A673 (cell line): ENCODE measurements at regions of chr12 and their contacts with region 1.

Region 1: GRCh38 chr12:6285063-6285477 is 25.4 kb upstream of the PLEKHG6 start:
- DNase-seq: peak; percentile 82
- H3K4me3 ChIP-seq: no peak overlapping the region
- H3K27ac ChIP-seq: no peak overlapping the region
- H3K4me1 ChIP-seq: no peaks in the 10 kb centered on the region
- H3K27me3 ChIP-seq: no peaks in the 10 kb centered on the region
- CTCF ChIP-seq: peak; percentile 93

Region 2: GRCh38 chr12:6195665-6196535 is 89.2 kb before region 1 on chr12:
- CTCF ChIA-PET with region 1: interaction called, 21 read pairs
- POLR2A ChIA-PET with region 1: no interaction called
- intact Hi-C with region 1: loop called (anchors 1 kb)
- DNase-seq: peak; percentile 78
- H3K4me3 ChIP-seq: no peak overlapping the region
- H3K27ac ChIP-seq: no peak overlapping the region
- H3K4me1 ChIP-seq: no peaks in the 10 kb centered on the region
- H3K27me3 ChIP-seq: peaks cover 7% of the 10 kb centered on the region
- CTCF ChIP-seq: peak; percentile 86

Region 3: GRCh38 chr12:6323340-6323994 is 38.4 kb after region 1 on chr12:
- CTCF ChIA-PET with region 1: no interaction called
- POLR2A ChIA-PET with region 1: no interaction called
- intact Hi-C with region 1: no loop called
- DNase-seq: peak; percentile 98
- H3K4me3 ChIP-seq: no peak overlapping the region
- H3K27ac ChIP-seq: peak overlapping the region; percentile 82
- H3K4me1 ChIP-seq: peaks cover 28% of the 10 kb centered on the region
- H3K27me3 ChIP-seq: no peaks in the 10 kb centered on the region
- CTCF ChIP-seq: peak; percentile 59